ENCODE measurements at regions of chr22 and their contacts with region 1.

Region 1: DNA sequence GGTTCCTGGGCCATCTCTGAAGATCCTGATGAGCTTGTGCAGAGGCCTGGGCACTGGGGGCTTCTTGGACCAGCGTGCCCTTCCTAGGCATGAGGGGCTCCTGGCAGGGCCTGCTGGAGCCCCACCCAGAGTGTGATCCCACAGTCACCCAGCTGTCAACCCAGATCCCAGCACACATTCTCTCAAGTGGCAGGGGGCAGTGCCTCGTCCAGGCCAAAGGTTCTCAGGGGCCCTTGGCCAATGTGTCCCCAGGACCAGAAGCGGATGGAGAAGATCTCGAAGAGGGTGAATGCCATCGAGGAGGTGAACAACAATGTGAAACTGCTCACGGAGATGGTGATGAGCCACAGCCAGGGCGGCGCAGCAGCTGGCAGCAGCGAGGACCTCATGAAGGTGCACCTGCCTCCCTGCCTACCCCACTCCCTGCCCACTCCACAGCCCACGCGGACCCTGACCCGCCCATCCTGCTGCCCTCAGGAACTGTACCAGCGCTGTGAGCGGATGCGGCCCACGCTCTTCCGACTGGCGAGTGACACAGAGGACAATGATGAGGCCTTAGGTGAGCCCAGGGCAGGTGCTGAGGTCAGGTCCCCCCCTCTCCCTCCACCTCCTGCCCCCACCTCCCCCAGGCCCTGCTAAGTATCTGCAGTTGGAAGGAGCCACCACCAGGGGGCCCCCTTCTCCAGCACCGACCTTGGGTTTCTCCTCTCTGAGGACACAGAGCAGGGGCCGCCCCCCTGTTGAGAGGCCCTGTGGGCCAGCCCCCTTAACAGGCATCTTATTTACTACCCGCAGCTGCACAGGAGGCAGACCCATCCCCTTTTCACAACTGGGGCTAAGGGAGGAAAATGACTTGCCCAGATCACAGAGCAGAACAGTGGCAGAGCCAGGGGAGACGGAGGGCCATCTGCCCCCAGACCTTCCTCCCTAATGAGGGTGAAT is 14.7 kb downstream of the GGA1 start:
- DNase-seq: no peak
- ATAC-seq: peak; percentile 88
- H3K4me3 ChIP-seq: no peak overlapping the region
- H3K27ac ChIP-seq: no peak overlapping the region
- H3K4me1 ChIP-seq: peaks cover 29% of the 10 kb centered on the region
- H3K27me3 ChIP-seq: no peaks in the 10 kb centered on the region
- CTCF ChIP-seq: peak; percentile 68 to 92 (median 74)
- EP300 ChIP-seq: no peak
- POLR2A ChIP-seq: peak; percentile 54
- RAD21 ChIP-seq: peak; percentile 85

Region 2: GRCh38 chr22:37552524-37553163 is 70.7 kb before region 1 on chr22:
- CTCF ChIA-PET with region 1: no interaction called
- POLR2A ChIA-PET with region 1: no interaction called
- RAD21 ChIA-PET with region 1: no interaction called
- SMC1A ChIA-PET with region 1: no interaction called
- in situ Hi-C with region 1: no loop called
- intact Hi-C with region 1: no loop called
- DNase-seq: no peak
- ATAC-seq: no peak
- H3K4me3 ChIP-seq: no peak overlapping the region
- H3K27ac ChIP-seq: no peak overlapping the region
- H3K4me1 ChIP-seq: no peaks in the 10 kb centered on the region
- H3K27me3 ChIP-seq: peaks cover 2% of the 10 kb centered on the region in 2 experiments; a peak in 2 of 4 replicates
- CTCF ChIP-seq: no peak
- EP300 ChIP-seq: no peak
- POLR2A ChIP-seq: no peak
- RAD21 ChIP-seq: no peak

Region 3: GRCh38 chr22:37566903-37567820 is 56.2 kb before region 1 on chr22:
- CTCF ChIA-PET with region 1: no interaction called
- POLR2A ChIA-PET with region 1: no interaction called
- RAD21 ChIA-PET with region 1: no interaction called
- SMC1A ChIA-PET with region 1: no interaction called
- in situ Hi-C with region 1: no loop called
- intact Hi-C with region 1: no loop called
- DNase-seq: peak; percentile 84
- ATAC-seq: peak; percentile 96
- H3K4me3 ChIP-seq: no peak overlapping the region
- H3K27ac ChIP-seq: no peak overlapping the region
- H3K4me1 ChIP-seq: peaks cover 11% of the 10 kb centered on the region
- H3K27me3 ChIP-seq: peaks cover 0 to 1% of the 10 kb centered on the region in 2 experiments; a peak in 2 of 4 replicates
- CTCF ChIP-seq: peak; percentile 95 to 97 (median 95)
- EP300 ChIP-seq: no peak; a peak in 1 of 4 replicates
- POLR2A ChIP-seq: no peak
- RAD21 ChIP-seq: peak; percentile 88

Region 4: GRCh38 chr22:37633625-37634416 is 10.5 kb after region 1 on chr22:
- CTCF ChIA-PET with region 1: interaction called, 275 read pairs
- POLR2A ChIA-PET with region 1: interaction called, 45 read pairs
- RAD21 ChIA-PET with region 1: interaction called, 15 read pairs
- SMC1A ChIA-PET with region 1: interaction called, 69 read pairs
- in situ Hi-C with region 1: no loop called
- intact Hi-C with region 1: no loop called
- DNase-seq: peak; percentile 60
- ATAC-seq: peak; percentile 82
- H3K4me3 ChIP-seq: peak overlapping the region; percentile 57
- H3K27ac ChIP-seq: peak overlapping the region; percentile 92
- H3K4me1 ChIP-seq: peaks cover 69% of the 10 kb centered on the region
- H3K27me3 ChIP-seq: no peaks in the 10 kb centered on the region
- CTCF ChIP-seq: peak in 1 of 3 experiments; percentile 18; a peak in 3 of 6 replicates
- EP300 ChIP-seq: peak; percentile 29 to 35; a peak in 3 of 4 replicates
- POLR2A ChIP-seq: peak; percentile 82
- RAD21 ChIP-seq: no peak

Region 5: GRCh38 chr22:37643225-37643847 is 20.0 kb after region 1 on chr22:
- CTCF ChIA-PET with region 1: interaction called, 275 read pairs
- POLR2A ChIA-PET with region 1: interaction called, 45 read pairs
- RAD21 ChIA-PET with region 1: interaction called, 76 read pairs
- SMC1A ChIA-PET with region 1: interaction called, 69 read pairs
- in situ Hi-C with region 1: no loop called
- intact Hi-C with region 1: no loop called
- DNase-seq: no peak
- ATAC-seq: peak; percentile 79
- H3K4me3 ChIP-seq: no peak overlapping the region
- H3K27ac ChIP-seq: no peak overlapping the region
- H3K4me1 ChIP-seq: peaks cover 28% of the 10 kb centered on the region
- H3K27me3 ChIP-seq: no peaks in the 10 kb centered on the region
- CTCF ChIP-seq: peak; percentile 86 to 92 (median 89)
- EP300 ChIP-seq: no peak
- POLR2A ChIP-seq: no peak
- RAD21 ChIP-seq: peak; percentile 62

Region 6: DNA sequence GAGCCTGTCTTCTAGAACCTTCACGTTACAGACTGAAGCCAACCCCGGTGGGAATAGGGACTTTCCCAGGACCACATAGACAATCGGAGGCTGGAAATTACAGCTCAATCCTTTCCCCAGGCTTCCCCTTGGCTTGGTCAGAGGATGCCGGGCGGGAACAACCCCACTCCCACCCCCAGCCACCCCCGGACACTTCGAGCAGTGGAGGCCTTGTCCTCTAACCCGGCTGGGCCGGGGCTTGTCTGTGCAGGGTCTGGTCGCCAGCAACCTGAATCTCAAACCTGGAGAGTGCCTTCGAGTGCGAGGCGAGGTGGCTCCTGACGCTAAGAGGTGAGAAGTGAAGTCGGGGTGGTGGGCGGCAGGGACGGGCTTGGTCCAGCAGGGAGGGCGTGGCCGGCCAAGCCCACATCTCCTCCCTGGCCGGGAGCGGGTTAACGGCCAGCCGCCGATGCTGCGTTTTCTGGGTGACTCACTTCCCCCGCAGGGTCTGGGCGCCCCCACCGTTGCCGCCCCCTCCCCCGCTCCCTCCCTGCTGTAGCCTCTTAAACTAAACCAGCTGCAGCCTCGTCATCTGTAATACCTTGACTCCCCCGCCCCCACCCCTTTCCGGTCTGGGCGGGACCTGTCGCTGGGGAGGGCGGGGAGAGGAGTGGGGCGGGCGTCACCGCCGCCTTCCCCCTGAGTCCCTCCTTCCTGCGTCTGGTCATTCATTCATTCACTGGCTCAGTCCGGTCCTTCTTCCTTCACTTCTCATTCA is 53.6 kb after region 1 on chr22:
- CTCF ChIA-PET with region 1: interaction called, 167 read pairs
- POLR2A ChIA-PET with region 1: interaction called, 14 read pairs
- RAD21 ChIA-PET with region 1: interaction called, 25 read pairs
- SMC1A ChIA-PET with region 1: interaction called, 10 read pairs
- in situ Hi-C with region 1: loop called (anchors 5 kb)
- intact Hi-C with region 1: loop called (anchors 1 kb)
- DNase-seq: no peak
- ATAC-seq: peak; percentile 73
- H3K4me3 ChIP-seq: peak overlapping the region; percentile 91
- H3K27ac ChIP-seq: peak overlapping the region; percentile 85
- H3K4me1 ChIP-seq: peaks cover 37% of the 10 kb centered on the region
- H3K27me3 ChIP-seq: no peaks in the 10 kb centered on the region
- CTCF ChIP-seq: no peak
- EP300 ChIP-seq: no peak
- POLR2A ChIP-seq: peak; percentile 78
- RAD21 ChIP-seq: no peak

Region 7: GRCh38 chr22:37686002-37686982 is 62.9 kb after region 1 on chr22 and contains the start of gene NOL12:
- CTCF ChIA-PET with region 1: interaction called, 167 read pairs
- POLR2A ChIA-PET with region 1: interaction called, 13 read pairs
- RAD21 ChIA-PET with region 1: interaction called, 14 read pairs
- SMC1A ChIA-PET with region 1: interaction called, 10 read pairs
- in situ Hi-C with region 1: loop called (anchors 5 kb)
- intact Hi-C with region 1: loop called (anchors 1 kb)
- DNase-seq: peak; percentile 72
- ATAC-seq: peak; percentile 90
- H3K4me3 ChIP-seq: peak within 1 kb of the TSS; percentile 100
- H3K27ac ChIP-seq: peak within 1 kb of the TSS; percentile 89
- H3K4me1 ChIP-seq: peaks cover 17% of the 10 kb centered on the region
- H3K27me3 ChIP-seq: no peaks in the 10 kb centered on the region
- CTCF ChIP-seq: 0 out of 6 replicates have a peak, but pooled peaks of 1 of the 3 experiments have one; percentile 5
- EP300 ChIP-seq: no peak
- POLR2A ChIP-seq: peak; percentile 86
- RAD21 ChIP-seq: no peak
- polyA plus RNA-seq, gene NOL12: 3.3 to 12.9 TPM

Region 8: GRCh38 chr22:37696657-37697537 is 73.6 kb after region 1 on chr22 and contains the start of gene TRIOBP:
- CTCF ChIA-PET with region 1: no interaction called
- POLR2A ChIA-PET with region 1: no interaction called
- RAD21 ChIA-PET with region 1: no interaction called
- SMC1A ChIA-PET with region 1: no interaction called
- in situ Hi-C with region 1: no loop called
- intact Hi-C with region 1: no loop called
- DNase-seq: peak; percentile 56
- ATAC-seq: peak; percentile 99
- H3K4me3 ChIP-seq: no peak within 1 kb of the TSS
- H3K27ac ChIP-seq: no peak within 1 kb of the TSS
- H3K4me1 ChIP-seq: no peaks in the 10 kb centered on the region; the same call in 1 of the 2 replicates
- H3K27me3 ChIP-seq: no peaks in the 10 kb centered on the region
- CTCF ChIP-seq: peak; percentile 9 to 31 (median 12); a peak in 3 of 6 replicates
- EP300 ChIP-seq: no peak
- POLR2A ChIP-seq: no peak
- RAD21 ChIP-seq: no peak
- polyA plus RNA-seq, gene TRIOBP: 0.21 to 0.53 TPM

Region 9: GRCh38 chr22:38062791-38063190 is 439.4 kb after region 1 on chr22:
- CTCF ChIA-PET with region 1: no interaction called
- POLR2A ChIA-PET with region 1: no interaction called
- RAD21 ChIA-PET with region 1: no interaction called
- SMC1A ChIA-PET with region 1: no interaction called
- in situ Hi-C with region 1: no loop called
- intact Hi-C with region 1: no loop called
- DNase-seq: no peak
- ATAC-seq: no peak
- H3K4me3 ChIP-seq: no peak overlapping the region
- H3K27ac ChIP-seq: no peak overlapping the region
- H3K4me1 ChIP-seq: 0 out of 2 replicates have a peak, but pooled peaks cover 2% of the 10 kb centered on the region
- H3K27me3 ChIP-seq: no peaks in the 10 kb centered on the region
- CTCF ChIP-seq: no peak
- EP300 ChIP-seq: no peak
- POLR2A ChIP-seq: no peak
- RAD21 ChIP-seq: no peak

Measured in GM12878 (cell line).